ENCODE measurements at regions of chr9 and their contacts with region 1.

Region 1: GRCh38 chr9:77011973-77012821 is 7.3 kb upstream of the FOXB2 start:
- DNase-seq: no peak
- ATAC-seq: no peak
- H3K4me3 Mint-ChIP-seq: peak overlapping the region; percentile 7
- H3K27ac Mint-ChIP-seq: no peak overlapping the region
- H3K4me1 Mint-ChIP-seq: peaks cover 6% of the 10 kb centered on the region
- H3K27me3 Mint-ChIP-seq: peaks cover 40% of the 10 kb centered on the region
- CTCF ChIP-seq: no peak

Region 2: GRCh38 chr9:76451234-76451633 is 561.0 kb before region 1 on chr9:
- CTCF ChIA-PET with region 1: no interaction called
- POLR2A ChIA-PET with region 1: no interaction called
- intact Hi-C with region 1: loop called (anchors 1 kb)
- DNase-seq: no peak
- ATAC-seq: no peak
- H3K4me3 Mint-ChIP-seq: no peak overlapping the region
- H3K27ac Mint-ChIP-seq: no peak overlapping the region
- H3K4me1 Mint-ChIP-seq: peaks cover 4% of the 10 kb centered on the region
- H3K27me3 Mint-ChIP-seq: no peaks in the 10 kb centered on the region
- CTCF ChIP-seq: no peak

Region 3: GRCh38 chr9:76810377-76810957 is 201.7 kb before region 1 on chr9:
- CTCF ChIA-PET with region 1: no interaction called
- POLR2A ChIA-PET with region 1: no interaction called
- intact Hi-C with region 1: loop called (anchors 1 kb)
- DNase-seq: no peak
- ATAC-seq: no peak
- H3K4me3 Mint-ChIP-seq: no peak overlapping the region
- H3K27ac Mint-ChIP-seq: no peak overlapping the region
- H3K4me1 Mint-ChIP-seq: no peaks in the 10 kb centered on the region
- H3K27me3 Mint-ChIP-seq: peaks cover 17% of the 10 kb centered on the region
- CTCF ChIP-seq: no peak

Region 4: DNA sequence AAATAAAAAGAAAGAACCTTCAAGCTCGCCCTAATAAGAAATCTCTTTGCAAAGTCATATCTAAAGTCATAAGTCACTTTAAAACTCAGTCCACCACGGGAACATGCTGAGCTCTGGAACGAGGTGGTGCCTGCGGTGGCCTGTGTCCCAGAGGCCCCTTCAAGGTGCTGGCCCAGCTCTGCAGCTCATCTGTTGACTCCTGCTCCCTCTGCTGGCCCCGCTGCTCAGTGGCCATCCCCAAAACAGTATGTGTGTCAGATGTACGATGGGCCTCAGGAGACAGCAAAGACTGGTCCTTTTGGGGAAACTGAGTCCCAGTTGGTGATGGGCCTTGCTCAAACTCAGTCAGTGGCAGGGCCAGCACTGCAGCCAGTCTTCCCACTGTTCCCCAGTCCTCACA is 15.5 kb before region 1 on chr9:
- CTCF ChIA-PET with region 1: no interaction called
- POLR2A ChIA-PET with region 1: no interaction called
- intact Hi-C with region 1: no loop called
- DNase-seq: no peak
- ATAC-seq: no peak
- H3K4me3 Mint-ChIP-seq: no peak overlapping the region
- H3K27ac Mint-ChIP-seq: no peak overlapping the region
- H3K4me1 Mint-ChIP-seq: no peaks in the 10 kb centered on the region
- H3K27me3 Mint-ChIP-seq: peaks cover 18% of the 10 kb centered on the region
- CTCF ChIP-seq: no peak

Measured in activated B cell treated with CpG ODN at 0.5 μM for 24 hours (primary cell).